HepG2 (cell line): ENCODE measurements at regions of chr18 and their contacts with region 1.

Region 1: GRCh38 chr18:62714671-62715435 is 488 bp upstream of the PHLPP1 start:
- DNase-seq: peak; percentile 98
- ATAC-seq: peak; percentile 94
- H3K4me3 ChIP-seq: peak overlapping the region; percentile 64 to 78 (median 72)
- H3K27ac ChIP-seq: peak overlapping the region; percentile 88
- H3K4me1 ChIP-seq: peaks cover 4% of the 10 kb centered on the region; the same call in 1 of the 2 replicates
- H3K27me3 ChIP-seq: no peaks in the 10 kb centered on the region; a peak in 1 of 5 replicates
- CTCF ChIP-seq: peak; percentile 96
- EP300 ChIP-seq: no peak
- POLR2A ChIP-seq: peak; percentile 21 to 37; a peak in 1 of 4 replicates
- RAD21 ChIP-seq: peak; percentile 92

Region 2: DNA sequence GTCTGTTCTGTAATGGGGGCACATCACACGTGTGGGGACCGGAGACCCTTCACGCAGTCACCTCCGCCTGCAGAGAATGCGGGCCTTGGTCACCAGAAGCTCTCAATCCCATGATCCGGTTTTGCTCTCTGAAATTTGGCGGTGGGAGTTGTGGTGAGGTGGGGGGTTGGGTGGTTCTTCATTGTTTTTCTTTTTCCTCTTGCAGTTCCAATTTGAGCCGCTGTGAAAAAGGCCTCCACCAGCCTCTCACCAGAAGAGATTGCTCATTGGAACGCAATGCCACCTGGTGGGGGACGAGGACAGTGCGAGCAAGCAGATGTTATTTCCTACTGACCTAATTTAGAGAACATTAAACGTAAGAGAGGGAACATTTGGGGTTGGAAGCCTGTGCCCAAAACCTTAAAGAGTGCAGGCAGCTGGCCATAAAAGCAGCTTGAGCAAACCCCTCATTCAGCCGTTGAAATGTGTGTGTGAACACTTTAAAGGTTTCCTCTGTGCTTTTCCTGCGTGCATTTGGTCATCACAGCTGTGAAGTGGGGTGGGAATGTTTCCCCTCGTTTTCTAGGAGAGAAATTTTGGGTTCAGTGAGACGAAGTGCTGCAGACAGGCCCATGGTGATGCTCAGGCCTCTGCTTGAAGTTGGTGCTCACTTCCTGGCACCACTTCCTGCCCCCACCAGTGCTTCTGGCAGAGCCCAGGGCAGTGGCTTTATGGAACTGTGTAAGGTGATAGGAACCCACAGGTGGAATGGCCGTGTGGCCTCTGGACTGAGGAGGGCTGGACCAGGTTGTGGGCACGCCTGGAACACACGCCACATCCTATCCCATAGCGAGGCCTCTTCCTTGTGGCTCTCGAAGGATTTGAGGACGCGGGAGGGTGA is 130.4 kb before region 1 on chr18:
- CTCF ChIA-PET with region 1: no interaction called
- POLR2A ChIA-PET with region 1: no interaction called
- in situ Hi-C with region 1: no loop called
- intact Hi-C with region 1: loop called (anchors 5 kb)
- DNase-seq: peak; percentile 82
- ATAC-seq: peak; percentile 76
- H3K4me3 ChIP-seq: no peak overlapping the region
- H3K27ac ChIP-seq: no peak overlapping the region
- H3K4me1 ChIP-seq: 0 out of 2 replicates have a peak, but pooled peaks cover 6% of the 10 kb centered on the region
- H3K27me3 ChIP-seq: no peaks in the 10 kb centered on the region
- CTCF ChIP-seq: peak; percentile 87
- EP300 ChIP-seq: no peak
- POLR2A ChIP-seq: no peak
- RAD21 ChIP-seq: peak; percentile 81

Region 3: DNA sequence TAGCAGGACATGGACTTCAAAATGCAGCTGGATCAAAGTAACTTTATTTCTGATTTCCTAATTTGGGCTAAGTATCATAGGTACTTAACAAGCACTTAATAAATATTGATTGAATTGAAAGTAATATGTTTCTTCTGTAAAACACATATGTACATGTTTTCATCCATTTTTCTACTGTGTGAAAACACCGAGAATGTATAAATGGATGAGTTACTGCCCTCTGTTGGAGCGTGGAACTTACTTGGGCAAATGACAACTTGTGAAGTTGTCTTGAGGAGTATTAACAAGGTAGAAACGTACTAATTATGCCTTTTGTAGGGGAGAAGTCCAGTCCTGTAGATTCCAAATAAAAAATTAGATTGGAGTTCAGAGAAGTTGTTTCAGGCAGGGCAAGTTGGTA is 87.7 kb after region 1 on chr18:
- CTCF ChIA-PET with region 1: no interaction called
- POLR2A ChIA-PET with region 1: interaction called, 4 read pairs
- in situ Hi-C with region 1: loop called (anchors 5 kb)
- intact Hi-C with region 1: loop called (anchors 2 kb)
- DNase-seq: no peak
- ATAC-seq: no peak; the same call in 2 of the 3 replicates
- H3K4me3 ChIP-seq: no peak overlapping the region
- H3K27ac ChIP-seq: no peak overlapping the region
- H3K4me1 ChIP-seq: peaks cover 51% of the 10 kb centered on the region
- H3K27me3 ChIP-seq: no peaks in the 10 kb centered on the region
- CTCF ChIP-seq: peak; percentile 29; the same call in 1 of the 2 replicates
- EP300 ChIP-seq: no peak
- POLR2A ChIP-seq: no peak
- RAD21 ChIP-seq: no peak

Region 4: GRCh38 chr18:62938487-62938886 is 223.6 kb after region 1 on chr18:
- CTCF ChIA-PET with region 1: no interaction called
- POLR2A ChIA-PET with region 1: no interaction called
- in situ Hi-C with region 1: no loop called
- intact Hi-C with region 1: loop called (anchors 5 kb)
- DNase-seq: no peak
- ATAC-seq: no peak
- H3K4me3 ChIP-seq: no peak overlapping the region
- H3K27ac ChIP-seq: no peak overlapping the region
- H3K4me1 ChIP-seq: peaks cover 9% of the 10 kb centered on the region
- H3K27me3 ChIP-seq: no peaks in the 10 kb centered on the region
- CTCF ChIP-seq: no peak
- EP300 ChIP-seq: no peak
- POLR2A ChIP-seq: no peak
- RAD21 ChIP-seq: no peak

Region 5: DNA sequence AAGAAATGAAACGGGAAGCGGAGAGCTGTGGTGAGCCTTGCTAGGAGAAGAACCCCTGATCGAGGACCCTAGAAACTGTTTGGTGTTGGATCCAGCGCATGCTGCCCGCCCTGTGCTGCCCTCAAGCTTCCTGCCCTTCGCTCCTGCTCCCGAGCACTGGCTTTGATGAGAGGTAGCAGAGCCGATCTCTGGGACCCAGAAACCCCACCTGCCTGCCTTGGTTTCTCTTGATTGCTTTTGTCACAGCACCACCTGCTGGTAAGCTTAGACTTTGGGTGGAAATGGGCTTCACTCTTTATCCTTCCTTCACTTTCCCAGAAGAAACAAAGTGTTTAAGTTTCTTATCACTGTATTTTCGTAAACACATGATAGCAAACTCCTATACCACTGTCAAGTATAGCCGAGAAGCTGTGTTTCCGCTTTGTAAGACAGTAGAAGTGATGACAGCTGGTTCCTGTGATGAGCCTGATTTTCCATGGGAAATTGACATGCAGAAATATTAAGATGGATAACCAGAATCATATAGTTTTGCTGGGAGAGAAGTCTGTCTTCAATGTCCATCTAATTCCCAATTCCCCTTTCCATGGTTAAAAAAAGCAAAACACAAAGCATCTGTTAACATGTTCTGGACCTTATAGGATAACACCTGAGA is 267.9 kb after region 1 on chr18:
- CTCF ChIA-PET with region 1: no interaction called
- POLR2A ChIA-PET with region 1: no interaction called
- in situ Hi-C with region 1: loop called (anchors 10 kb)
- intact Hi-C with region 1: loop called (anchors 1 kb)
- DNase-seq: peak; percentile 36
- ATAC-seq: peak; percentile 34
- H3K4me3 ChIP-seq: no peak overlapping the region
- H3K27ac ChIP-seq: no peak overlapping the region
- H3K4me1 ChIP-seq: peaks cover 5% of the 10 kb centered on the region; the same call in 1 of the 2 replicates
- H3K27me3 ChIP-seq: no peaks in the 10 kb centered on the region
- CTCF ChIP-seq: peak; percentile 85
- EP300 ChIP-seq: no peak
- POLR2A ChIP-seq: no peak
- RAD21 ChIP-seq: peak; percentile 53